H1 (cell line): ENCODE measurements at regions of chr11 and their contacts with region 1.

Region 1: GRCh38 chr11:10413268-10413667 is 41.8 kb upstream of the AMPD3 start:
- DNase-seq: no peak
- H3K4me3 ChIP-seq: no peak overlapping the region
- H3K27ac ChIP-seq: no peak overlapping the region
- H3K4me1 ChIP-seq: no peaks in the 10 kb centered on the region
- H3K27me3 ChIP-seq: no peaks in the 10 kb centered on the region
- CTCF ChIP-seq: peak in 2 of 3 experiments; percentile 8 to 10; a peak in 1 of 4 replicates
- EP300 ChIP-seq: no peak
- POLR2A ChIP-seq: no peak
- RAD21 ChIP-seq: peak; percentile 33 to 35; a peak in 3 of 4 replicates

Region 2: DNA sequence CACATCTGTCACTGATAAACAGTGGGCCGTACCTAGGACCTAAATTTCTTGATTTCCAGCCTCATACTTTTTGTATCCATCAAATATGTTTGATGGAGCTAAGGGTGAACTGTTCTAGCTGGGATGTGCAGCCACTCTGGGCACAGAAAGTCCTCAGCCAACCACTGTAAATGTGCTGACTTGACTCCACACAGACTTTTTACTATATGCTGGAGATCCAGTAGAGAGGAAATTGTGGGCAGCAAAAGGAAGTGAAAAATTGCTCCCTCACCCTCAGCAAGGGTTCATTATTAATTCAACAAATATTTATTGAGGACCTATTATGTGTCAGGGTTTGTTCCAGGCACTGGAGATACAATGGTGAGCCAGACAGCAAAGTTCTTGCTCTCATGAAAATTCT is 12.4 kb before region 1 on chr11:
- CTCF ChIA-PET with region 1: interaction called, 16 read pairs
- POLR2A ChIA-PET with region 1: interaction called, 3 read pairs
- DNase-seq: no peak
- H3K4me3 ChIP-seq: no peak overlapping the region
- H3K27ac ChIP-seq: no peak overlapping the region
- H3K4me1 ChIP-seq: no peaks in the 10 kb centered on the region
- H3K27me3 ChIP-seq: no peaks in the 10 kb centered on the region; a peak in 1 of 7 replicates
- CTCF ChIP-seq: no peak
- EP300 ChIP-seq: no peak
- POLR2A ChIP-seq: no peak
- RAD21 ChIP-seq: no peak

Region 3: GRCh38 chr11:10455637-10456487 is 42.6 kb after region 1 on chr11:
- CTCF ChIA-PET with region 1: interaction called, 20 read pairs
- POLR2A ChIA-PET with region 1: no interaction called
- DNase-seq: peak in 1 of 2 experiments; percentile 52
- H3K4me3 ChIP-seq: peak overlapping the region in 2 of 4 experiments; percentile 5 to 13; a peak in 1 of 8 replicates
- H3K27ac ChIP-seq: no peak overlapping the region
- H3K4me1 ChIP-seq: peaks cover 6 to 19% (median 7%) of the 10 kb centered on the region in 4 experiments
- H3K27me3 ChIP-seq: peaks cover 0 to 13% (median 8%) of the 10 kb centered on the region in 4 experiments; a peak in 4 of 7 replicates
- CTCF ChIP-seq: no peak
- EP300 ChIP-seq: no peak
- POLR2A ChIP-seq: no peak
- RAD21 ChIP-seq: no peak

Region 4: DNA sequence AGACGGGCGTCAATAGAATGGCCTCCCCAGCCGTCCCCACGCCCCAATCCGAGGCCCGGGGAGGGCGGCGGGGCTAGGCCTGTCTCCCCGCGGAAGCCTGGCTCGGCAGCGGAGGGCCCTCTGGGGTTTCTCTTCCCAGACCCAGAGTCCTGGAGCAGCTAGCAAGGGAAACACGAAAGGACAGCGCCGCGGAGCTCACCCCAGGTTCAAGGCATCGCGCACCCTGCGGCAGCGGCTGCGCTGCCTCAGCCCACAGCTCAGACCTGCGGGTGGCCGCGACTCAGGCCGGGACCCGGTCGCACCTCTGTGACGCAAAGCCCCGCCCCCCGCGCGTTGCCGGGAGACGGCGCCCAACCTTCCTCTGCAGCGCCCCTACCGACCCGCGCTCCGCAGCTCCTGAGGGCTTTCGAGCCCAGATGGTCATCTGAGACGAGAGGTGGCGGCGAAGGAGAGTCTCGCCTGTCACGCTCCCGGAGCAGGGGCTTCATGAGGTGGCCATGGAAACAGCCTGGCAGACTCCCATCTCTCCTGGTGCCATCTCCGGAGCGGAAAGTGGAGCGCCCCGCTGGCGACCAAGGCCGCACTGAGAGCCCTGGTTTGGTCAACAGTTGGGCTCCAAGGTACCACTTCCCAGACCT is 127.8 kb after region 1 on chr11 and contains the start of gene RNF141:
- CTCF ChIA-PET with region 1: interaction called, 10 read pairs
- POLR2A ChIA-PET with region 1: interaction called, 5 read pairs
- DNase-seq: peak; percentile 86 to 100
- H3K4me3 ChIP-seq: peak within 1 kb of the TSS; percentile 73 to 93 (median 87)
- H3K27ac ChIP-seq: peak within 1 kb of the TSS; percentile 63
- H3K4me1 ChIP-seq: peaks cover 0 to 6% (median 0%) of the 10 kb centered on the region in 4 experiments; a peak in 2 of 7 replicates
- H3K27me3 ChIP-seq: no peaks in the 10 kb centered on the region
- CTCF ChIP-seq: peak; percentile 73 to 90 (median 82)
- EP300 ChIP-seq: peak in 1 of 2 experiments; percentile 52; a peak in 1 of 3 replicates
- POLR2A ChIP-seq: peak; percentile 91 to 96
- RAD21 ChIP-seq: peak; percentile 51 to 58; a peak in 3 of 4 replicates
- total RNA-seq, gene RNF141: 20.9 and 22.8 TPM in 2 replicates

Region 5: GRCh38 chr11:10735481-10736475 is 322.5 kb after region 1 on chr11:
- CTCF ChIA-PET with region 1: interaction called, 10 read pairs
- POLR2A ChIA-PET with region 1: no interaction called
- DNase-seq: peak; percentile 90 to 98
- H3K4me3 ChIP-seq: peak overlapping the region in 1 of 4 experiments; percentile 47; a peak in 4 of 8 replicates
- H3K27ac ChIP-seq: no peak overlapping the region
- H3K4me1 ChIP-seq: peaks cover 0 to 4% (median 3%) of the 10 kb centered on the region in 4 experiments; a peak in 4 of 7 replicates
- H3K27me3 ChIP-seq: no peaks in the 10 kb centered on the region; a peak in 1 of 7 replicates
- CTCF ChIP-seq: peak; percentile 85 to 95 (median 93)
- EP300 ChIP-seq: no peak; a peak in 1 of 3 replicates
- POLR2A ChIP-seq: 0 out of 3 replicates have a peak, but pooled peaks of 1 of the 2 experiments have one; percentile 23
- RAD21 ChIP-seq: peak; percentile 99